ENCODE measurements at regions of chr11 and their contacts with region 1.

Region 1: DNA sequence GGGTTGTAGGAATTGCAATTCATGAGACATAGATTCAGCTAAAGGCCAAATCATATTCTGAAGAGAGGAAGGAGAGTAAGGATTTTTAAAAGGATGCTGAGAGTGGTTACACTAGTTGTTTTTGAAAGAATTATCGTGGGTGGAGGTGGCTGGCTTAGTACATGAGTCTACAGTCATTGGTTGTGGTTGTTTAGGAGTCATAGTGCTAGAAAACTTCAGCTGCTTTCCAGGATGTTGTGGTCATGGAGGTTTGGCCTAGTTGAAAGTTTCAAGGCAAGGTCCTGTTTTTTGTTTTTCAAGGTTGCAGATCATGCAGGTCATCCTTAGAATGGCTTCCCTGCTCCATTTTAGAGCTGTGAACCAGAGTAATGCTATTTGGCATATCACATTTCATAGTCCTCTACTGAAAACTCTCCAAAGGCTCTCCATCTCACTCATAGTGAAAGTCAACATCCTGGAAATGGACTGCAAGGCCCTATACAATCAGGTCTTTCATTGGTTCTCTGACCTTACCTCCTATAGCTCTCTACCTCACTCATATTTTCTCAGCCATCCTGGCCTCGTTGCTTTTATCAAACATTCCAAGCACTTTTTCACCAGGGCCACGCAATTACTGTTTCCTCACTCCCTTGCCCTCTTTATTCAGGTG is 26.1 kb upstream of the ZBTB44 start:
- DNase-seq: no peak
- ATAC-seq: no peak
- H3K4me3 ChIP-seq: no peak overlapping the region
- H3K27ac ChIP-seq: no peak overlapping the region
- H3K4me1 ChIP-seq: no peaks in the 10 kb centered on the region
- H3K27me3 ChIP-seq: no peaks in the 10 kb centered on the region; the same call in 1 of the 2 replicates
- CTCF ChIP-seq: no peak

Region 2: GRCh38 chr11:128965485-128965884 is 1375.3 kb before region 1 on chr11:
- CTCF ChIA-PET with region 1: interaction called, 15 read pairs
- POLR2A ChIA-PET with region 1: no interaction called
- intact Hi-C with region 1: no loop called
- DNase-seq: no peak
- ATAC-seq: no peak
- H3K4me3 ChIP-seq: no peak overlapping the region
- H3K27ac ChIP-seq: no peak overlapping the region
- H3K4me1 ChIP-seq: no peaks in the 10 kb centered on the region
- H3K27me3 ChIP-seq: no peaks in the 10 kb centered on the region
- CTCF ChIP-seq: no peak

Measured in PC-3 (cell line).